ENCODE measurements at regions of chr11 and their contacts with region 1.

Region 1: DNA sequence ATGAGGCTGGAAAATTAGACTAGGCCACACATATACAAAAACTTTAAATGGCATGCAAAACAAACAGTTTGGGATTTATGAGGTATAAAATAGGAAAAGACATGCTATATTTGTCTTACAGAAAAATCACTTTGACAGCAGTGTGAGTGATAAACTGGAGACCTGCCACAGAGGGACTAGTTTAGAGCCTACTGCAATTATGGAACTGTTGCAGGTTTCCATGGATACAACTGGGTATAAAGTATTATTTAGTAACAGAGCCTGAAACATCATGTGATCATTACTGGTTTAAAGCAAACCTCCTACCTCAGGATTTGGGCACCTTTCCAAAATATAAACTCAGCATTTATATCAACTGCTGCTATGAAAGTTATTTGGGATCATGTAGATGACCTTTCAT is 1032.5 kb downstream of the DLG2 start:
- DNase-seq: no peak
- ATAC-seq: no peak
- H3K4me3 ChIP-seq: no peak overlapping the region
- H3K27ac ChIP-seq: no peak overlapping the region
- H3K4me1 ChIP-seq: no peaks in the 10 kb centered on the region
- H3K27me3 ChIP-seq: no peaks in the 10 kb centered on the region
- CTCF ChIP-seq: no peak

Region 2: DNA sequence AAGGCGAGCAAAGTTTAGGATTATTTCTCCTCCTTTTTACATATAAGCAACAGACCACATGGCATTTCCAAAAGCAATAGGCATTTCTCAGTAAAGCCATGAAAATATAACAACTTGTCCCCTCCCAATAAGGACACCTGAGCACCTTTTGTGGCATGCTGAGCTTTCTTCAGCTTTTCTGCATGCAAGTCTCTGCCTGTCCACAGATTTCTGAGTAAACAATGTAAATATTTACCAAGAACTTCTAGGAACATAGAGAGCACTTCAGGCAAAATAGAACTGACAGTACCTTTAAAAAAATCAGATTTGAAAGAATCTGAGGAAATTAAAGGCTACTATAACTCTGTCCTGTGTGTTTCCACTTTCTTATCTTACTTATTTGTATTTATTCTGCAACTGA is 82.5 kb before region 1 on chr11:
- CTCF ChIA-PET with region 1: no interaction called
- POLR2A ChIA-PET with region 1: interaction called, 12 read pairs
- in situ Hi-C with region 1: no loop called
- intact Hi-C with region 1: no loop called
- DNase-seq: no peak
- ATAC-seq: no peak
- H3K4me3 ChIP-seq: no peak overlapping the region
- H3K27ac ChIP-seq: no peak overlapping the region
- H3K4me1 ChIP-seq: no peaks in the 10 kb centered on the region
- H3K27me3 ChIP-seq: no peaks in the 10 kb centered on the region
- CTCF ChIP-seq: no peak